ENCODE measurements at regions of chr4 and their contacts with region 1.

Region 1: DNA sequence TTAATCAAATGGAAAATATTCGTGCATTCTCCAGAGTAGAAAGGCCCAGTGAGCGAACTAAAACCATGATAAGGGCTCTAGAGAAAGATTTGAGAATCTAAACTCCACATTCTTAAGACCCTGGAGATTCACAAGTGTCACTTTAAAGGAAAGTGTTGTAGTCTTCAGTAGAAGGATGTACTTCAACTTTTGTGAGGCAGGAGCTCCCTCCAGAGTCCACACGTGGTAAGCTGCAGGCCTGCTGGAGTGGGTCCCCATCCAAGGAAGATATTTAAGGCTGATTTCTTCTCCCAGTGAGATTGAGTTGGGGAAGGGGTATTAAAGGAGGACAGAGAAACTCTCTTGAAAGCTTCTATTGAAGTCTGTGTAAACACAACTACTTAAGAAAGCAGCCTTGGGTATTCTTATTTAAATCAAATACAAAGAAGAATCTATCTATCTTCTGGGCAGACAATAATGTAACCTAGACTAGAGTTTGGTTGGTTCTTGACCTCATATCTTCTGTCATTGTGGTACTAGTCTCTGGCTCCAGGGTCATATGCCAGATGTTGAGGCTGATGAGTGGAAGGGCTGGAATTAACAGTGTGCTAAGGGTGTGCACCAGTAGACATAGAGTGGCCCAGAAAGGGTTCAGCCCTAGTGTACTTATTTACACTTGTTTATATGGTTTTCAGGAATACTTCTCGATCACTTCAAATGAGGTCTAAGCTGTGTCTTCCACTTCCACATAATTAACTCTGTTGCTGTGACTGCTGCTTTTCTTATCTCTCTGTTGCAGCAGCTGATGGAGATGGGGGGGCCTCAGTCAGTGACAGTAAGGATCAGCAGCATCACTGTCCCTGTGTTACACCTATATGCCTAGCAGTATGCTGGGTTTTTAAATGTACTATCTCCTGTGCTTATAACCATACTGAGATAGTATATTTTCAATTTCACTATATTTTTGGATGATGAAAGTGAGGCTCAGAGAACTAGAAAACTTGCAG is 76.1 kb downstream of the HMGB2 start:
- DNase-seq: no peak
- ATAC-seq: peak; percentile 92
- H3K4me3 ChIP-seq: no peak overlapping the region
- H3K27ac ChIP-seq: no peak overlapping the region
- H3K4me1 ChIP-seq: peaks cover 15% of the 10 kb centered on the region
- H3K27me3 ChIP-seq: no peaks in the 10 kb centered on the region
- CTCF ChIP-seq: peak; percentile 83 to 95 (median 91)
- EP300 ChIP-seq: no peak
- POLR2A ChIP-seq: no peak
- RAD21 ChIP-seq: peak; percentile 96

Region 2: GRCh38 chr4:172596206-172596605 is 661.8 kb before region 1 on chr4:
- CTCF ChIA-PET with region 1: no interaction called
- POLR2A ChIA-PET with region 1: no interaction called
- RAD21 ChIA-PET with region 1: no interaction called
- SMC1A ChIA-PET with region 1: no interaction called
- in situ Hi-C with region 1: no loop called
- intact Hi-C with region 1: no loop called
- DNase-seq: no peak
- ATAC-seq: no peak
- H3K4me3 ChIP-seq: no peak overlapping the region
- H3K27ac ChIP-seq: no peak overlapping the region
- H3K4me1 ChIP-seq: no peaks in the 10 kb centered on the region
- H3K27me3 ChIP-seq: no peaks in the 10 kb centered on the region
- CTCF ChIP-seq: 0 out of 6 replicates have a peak, but pooled peaks of 1 of the 3 experiments have one; percentile 4
- EP300 ChIP-seq: no peak
- POLR2A ChIP-seq: no peak
- RAD21 ChIP-seq: no peak

Region 3: DNA sequence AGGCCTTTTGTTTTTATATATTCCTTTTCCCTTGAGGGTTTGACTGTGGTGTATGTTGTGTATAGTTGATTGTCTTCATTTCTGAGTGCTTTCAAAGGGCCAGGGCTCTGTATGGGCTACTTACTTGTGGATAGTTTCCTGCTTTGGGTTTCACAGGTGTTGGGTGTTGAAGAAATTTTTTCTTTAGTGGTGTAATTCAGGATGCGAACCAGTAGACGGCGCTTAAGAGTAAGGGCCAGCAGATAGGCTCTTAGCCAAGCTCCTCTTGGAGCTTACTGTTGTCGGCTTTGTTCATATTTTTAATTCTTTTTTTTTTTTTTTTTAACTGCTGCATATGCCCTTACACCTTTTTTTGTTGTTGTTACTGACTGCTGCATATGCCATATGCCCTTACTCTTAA is 365.7 kb before region 1 on chr4:
- CTCF ChIA-PET with region 1: interaction called, 10 read pairs
- POLR2A ChIA-PET with region 1: no interaction called
- RAD21 ChIA-PET with region 1: interaction called, 4 read pairs
- SMC1A ChIA-PET with region 1: interaction called, 4 read pairs
- in situ Hi-C with region 1: no loop called
- intact Hi-C with region 1: loop called (anchors 10 kb)
- DNase-seq: no peak
- ATAC-seq: peak; percentile 69
- H3K4me3 ChIP-seq: no peak overlapping the region
- H3K27ac ChIP-seq: no peak overlapping the region
- H3K4me1 ChIP-seq: no peaks in the 10 kb centered on the region
- H3K27me3 ChIP-seq: no peaks in the 10 kb centered on the region
- CTCF ChIP-seq: peak; percentile 43 to 78 (median 69)
- EP300 ChIP-seq: no peak
- POLR2A ChIP-seq: no peak
- RAD21 ChIP-seq: peak; percentile 29

Region 4: GRCh38 chr4:173039617-173040577 is 218.1 kb before region 1 on chr4:
- CTCF ChIA-PET with region 1: interaction called, 12 read pairs
- POLR2A ChIA-PET with region 1: no interaction called
- RAD21 ChIA-PET with region 1: interaction called, 5 read pairs
- SMC1A ChIA-PET with region 1: interaction called, 4 read pairs
- in situ Hi-C with region 1: no loop called
- intact Hi-C with region 1: no loop called
- DNase-seq: no peak
- ATAC-seq: no peak
- H3K4me3 ChIP-seq: no peak overlapping the region
- H3K27ac ChIP-seq: no peak overlapping the region
- H3K4me1 ChIP-seq: no peaks in the 10 kb centered on the region
- H3K27me3 ChIP-seq: no peaks in the 10 kb centered on the region
- CTCF ChIP-seq: no peak
- EP300 ChIP-seq: no peak
- POLR2A ChIP-seq: no peak
- RAD21 ChIP-seq: no peak

Region 5: DNA sequence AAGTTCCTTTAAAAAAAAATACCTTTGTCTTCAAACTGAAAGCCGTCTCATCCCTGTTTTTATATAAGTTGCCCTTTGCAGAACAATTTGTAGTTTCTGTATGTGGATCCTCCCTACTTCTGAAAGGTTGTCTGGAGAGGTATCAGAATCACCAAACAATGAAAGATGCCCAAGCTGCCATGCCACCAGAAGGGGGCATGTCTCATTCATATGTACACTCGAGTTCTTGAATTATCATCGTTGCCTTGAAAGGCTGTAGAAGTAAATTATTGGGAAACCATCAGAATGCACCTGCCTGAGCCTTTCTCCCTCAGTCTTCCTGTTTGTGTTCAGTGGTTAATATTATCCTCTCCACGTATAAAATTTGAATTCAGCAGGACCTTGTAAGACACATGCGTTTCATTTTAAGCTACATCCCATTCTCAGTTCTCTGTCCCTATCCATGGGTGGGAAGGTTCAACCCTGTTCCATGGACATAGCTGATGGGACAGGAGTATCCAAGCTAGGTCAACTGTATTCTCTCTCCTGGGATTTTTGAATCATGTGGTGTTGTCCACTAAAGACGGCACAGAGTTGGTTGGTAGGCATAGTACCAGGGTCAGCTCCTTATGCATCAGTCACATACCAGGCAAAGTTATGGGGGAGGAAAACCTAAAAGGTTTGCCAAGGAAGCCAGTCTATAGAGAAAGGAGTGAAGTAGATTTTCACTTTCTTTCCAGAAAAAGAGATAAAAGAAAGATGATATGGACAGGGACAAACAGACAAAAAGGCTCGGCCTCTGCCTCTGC is 65.5 kb before region 1 on chr4:
- CTCF ChIA-PET with region 1: interaction called, 25 read pairs
- POLR2A ChIA-PET with region 1: no interaction called
- RAD21 ChIA-PET with region 1: interaction called, 6 read pairs
- SMC1A ChIA-PET with region 1: interaction called, 12 read pairs
- in situ Hi-C with region 1: no loop called
- intact Hi-C with region 1: no loop called
- DNase-seq: no peak
- ATAC-seq: peak; percentile 44
- H3K4me3 ChIP-seq: no peak overlapping the region
- H3K27ac ChIP-seq: no peak overlapping the region
- H3K4me1 ChIP-seq: peaks cover 15% of the 10 kb centered on the region; the same call in 1 of the 2 replicates
- H3K27me3 ChIP-seq: no peaks in the 10 kb centered on the region
- CTCF ChIP-seq: peak; percentile 9 to 25 (median 11); a peak in 2 of 6 replicates
- EP300 ChIP-seq: no peak
- POLR2A ChIP-seq: no peak
- RAD21 ChIP-seq: peak; percentile 34; the same call in 1 of the 2 replicates

Region 6: DNA sequence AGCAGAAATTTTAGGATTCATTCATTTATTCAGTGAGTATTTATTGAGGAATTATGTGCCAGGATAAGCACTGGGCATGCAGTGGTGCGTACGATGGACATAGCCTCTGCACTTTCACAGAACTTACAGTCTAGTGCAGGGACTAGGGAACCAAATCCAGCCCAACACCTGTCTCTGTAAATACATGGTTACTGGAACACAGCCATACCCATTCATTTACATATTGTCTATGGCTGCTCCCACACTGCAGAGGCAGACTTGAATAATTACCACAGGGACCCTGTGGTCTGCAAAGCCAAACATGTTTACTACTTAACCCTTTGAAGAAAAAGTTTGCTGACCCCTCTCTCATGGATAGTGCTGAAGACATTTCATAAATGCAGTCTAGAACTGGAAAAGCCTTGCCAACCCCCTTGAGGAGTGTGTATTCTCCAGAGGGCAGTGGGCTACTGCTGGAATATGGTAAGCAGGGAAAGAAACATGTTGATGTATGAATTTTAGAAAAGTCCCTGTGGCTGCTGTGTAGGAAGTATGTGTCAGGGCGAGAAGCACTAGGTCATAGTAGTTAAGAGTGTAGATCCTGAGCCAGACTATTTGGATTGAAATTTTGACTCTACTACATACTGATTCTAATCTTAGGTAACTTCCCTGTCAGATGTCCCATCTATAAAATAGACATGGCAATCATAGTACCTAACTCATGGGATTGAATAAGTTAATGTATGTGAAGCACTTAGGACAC is 13.9 kb before region 1 on chr4:
- CTCF ChIA-PET with region 1: interaction called, 29 read pairs
- POLR2A ChIA-PET with region 1: no interaction called
- RAD21 ChIA-PET with region 1: interaction called, 6 read pairs
- SMC1A ChIA-PET with region 1: interaction called, 14 read pairs
- in situ Hi-C with region 1: no loop called
- intact Hi-C with region 1: no loop called
- DNase-seq: no peak
- ATAC-seq: peak; percentile 78
- H3K4me3 ChIP-seq: no peak overlapping the region
- H3K27ac ChIP-seq: no peak overlapping the region
- H3K4me1 ChIP-seq: peaks cover 30% of the 10 kb centered on the region
- H3K27me3 ChIP-seq: no peaks in the 10 kb centered on the region
- CTCF ChIP-seq: no peak
- EP300 ChIP-seq: no peak
- POLR2A ChIP-seq: no peak
- RAD21 ChIP-seq: no peak

Region 7: GRCh38 chr4:173307778-173308177 is 49.8 kb after region 1 on chr4:
- CTCF ChIA-PET with region 1: interaction called, 12 read pairs
- POLR2A ChIA-PET with region 1: no interaction called
- RAD21 ChIA-PET with region 1: no interaction called
- SMC1A ChIA-PET with region 1: interaction called, 4 read pairs
- in situ Hi-C with region 1: no loop called
- intact Hi-C with region 1: no loop called
- DNase-seq: no peak
- ATAC-seq: no peak
- H3K4me3 ChIP-seq: no peak overlapping the region
- H3K27ac ChIP-seq: no peak overlapping the region
- H3K4me1 ChIP-seq: no peaks in the 10 kb centered on the region
- H3K27me3 ChIP-seq: no peaks in the 10 kb centered on the region
- CTCF ChIP-seq: no peak
- EP300 ChIP-seq: no peak
- POLR2A ChIP-seq: no peak
- RAD21 ChIP-seq: no peak

Measured in GM12878 (cell line).